OCI-LY7 (cell line): ENCODE measurements at regions of chr1 and their contacts with region 1.

Region 1: DNA sequence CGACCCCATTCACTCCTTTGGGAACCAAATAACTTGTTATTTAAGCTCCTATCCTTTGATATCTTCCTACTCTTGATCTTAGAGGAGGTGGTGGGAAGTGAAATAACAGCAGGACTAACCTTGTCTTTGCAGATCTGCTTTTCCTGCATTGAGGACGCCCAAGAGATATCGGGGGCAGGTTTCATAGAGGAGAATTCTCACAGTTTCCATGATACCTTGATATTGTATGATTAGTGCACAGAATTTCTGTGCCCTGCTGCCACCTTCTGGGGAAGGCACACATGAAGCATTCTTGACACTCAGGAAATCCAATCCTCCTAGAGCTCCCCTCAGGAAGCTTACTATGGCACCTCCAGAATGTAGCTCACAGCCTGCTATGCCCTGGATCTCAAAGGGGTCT is 1.6 kb downstream of the CD1B start:
- DNase-seq: peak; percentile 68
- H3K4me3 ChIP-seq: no peak overlapping the region
- H3K27ac ChIP-seq: no peak overlapping the region
- H3K4me1 ChIP-seq: peaks cover 19% of the 10 kb centered on the region
- CTCF ChIP-seq: peak; percentile 92

Region 2: DNA sequence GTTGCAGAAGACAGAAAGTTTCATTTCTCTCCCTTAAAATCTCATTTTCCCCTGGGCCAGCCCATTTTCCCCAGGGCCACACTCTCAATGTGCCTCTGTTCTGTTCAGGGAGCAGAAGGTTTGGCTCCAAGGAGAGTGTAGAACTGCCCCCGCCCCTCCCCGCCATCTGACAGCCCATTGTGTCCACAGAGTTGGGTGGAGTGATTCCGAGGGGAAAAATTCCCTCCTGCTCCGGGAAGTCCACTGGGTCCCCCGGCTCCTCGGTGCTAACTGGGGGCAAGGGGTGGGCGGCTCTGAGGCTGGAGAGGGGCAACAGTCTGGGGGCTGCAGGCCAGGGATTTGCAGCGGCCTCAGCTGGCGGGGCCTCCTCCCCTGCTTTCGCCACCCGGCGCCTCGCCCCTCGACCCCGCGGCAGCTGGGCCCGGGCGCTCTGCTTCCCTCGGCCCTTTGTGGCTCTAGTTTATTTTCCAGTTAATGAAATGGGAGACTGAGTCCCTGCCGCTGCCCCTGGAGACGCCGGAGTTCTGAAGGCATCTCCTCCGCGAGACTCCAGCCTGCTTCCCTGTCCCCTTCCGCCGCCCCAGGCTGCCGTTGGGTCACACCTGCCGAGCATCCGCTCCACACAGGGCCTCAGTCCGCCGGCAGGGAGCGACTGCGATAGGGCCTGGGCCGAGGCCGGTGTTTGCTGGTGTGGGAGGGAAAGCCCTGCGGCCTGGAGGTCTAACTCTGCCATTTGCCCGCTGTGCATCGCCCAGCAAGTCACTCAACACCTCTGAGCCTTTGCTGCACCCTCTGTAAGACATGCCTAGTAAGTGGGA is 350.9 kb before region 1 on chr1:
- CTCF ChIA-PET with region 1: no interaction called
- POLR2A ChIA-PET with region 1: no interaction called
- intact Hi-C with region 1: no loop called
- DNase-seq: no peak
- H3K4me3 ChIP-seq: no peak overlapping the region
- H3K27ac ChIP-seq: no peak overlapping the region
- H3K4me1 ChIP-seq: no peaks in the 10 kb centered on the region
- CTCF ChIP-seq: no peak

Region 3: DNA sequence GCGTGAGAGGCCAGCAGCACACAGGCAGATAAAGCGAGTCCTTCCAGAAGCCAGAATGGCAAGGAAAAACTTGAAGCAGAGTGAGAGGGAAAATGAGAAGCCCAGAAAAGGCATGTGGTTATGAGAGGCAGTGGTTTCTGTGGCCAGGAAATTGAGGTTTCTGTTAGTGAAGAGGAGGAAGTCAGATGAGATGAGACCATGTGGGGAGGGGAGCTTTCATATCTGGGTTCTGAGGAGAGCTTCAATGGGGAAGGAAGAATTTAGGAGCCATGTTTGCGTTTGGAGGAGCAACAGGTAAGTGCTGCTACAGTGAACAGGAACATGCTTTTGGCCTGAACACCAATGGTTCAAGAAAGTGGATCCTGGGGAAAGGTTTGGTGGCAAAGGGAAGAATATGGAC is 81.6 kb before region 1 on chr1:
- CTCF ChIA-PET with region 1: interaction called, 15 read pairs
- POLR2A ChIA-PET with region 1: interaction called, 3 read pairs
- intact Hi-C with region 1: loop called (anchors 1 kb)
- DNase-seq: peak; percentile 81
- H3K4me3 ChIP-seq: peak overlapping the region; percentile 16
- H3K27ac ChIP-seq: no peak overlapping the region
- H3K4me1 ChIP-seq: peaks cover 25% of the 10 kb centered on the region
- CTCF ChIP-seq: no peak